ENCODE measurements at regions of chr1 and their contacts with region 1.

Region 1: DNA sequence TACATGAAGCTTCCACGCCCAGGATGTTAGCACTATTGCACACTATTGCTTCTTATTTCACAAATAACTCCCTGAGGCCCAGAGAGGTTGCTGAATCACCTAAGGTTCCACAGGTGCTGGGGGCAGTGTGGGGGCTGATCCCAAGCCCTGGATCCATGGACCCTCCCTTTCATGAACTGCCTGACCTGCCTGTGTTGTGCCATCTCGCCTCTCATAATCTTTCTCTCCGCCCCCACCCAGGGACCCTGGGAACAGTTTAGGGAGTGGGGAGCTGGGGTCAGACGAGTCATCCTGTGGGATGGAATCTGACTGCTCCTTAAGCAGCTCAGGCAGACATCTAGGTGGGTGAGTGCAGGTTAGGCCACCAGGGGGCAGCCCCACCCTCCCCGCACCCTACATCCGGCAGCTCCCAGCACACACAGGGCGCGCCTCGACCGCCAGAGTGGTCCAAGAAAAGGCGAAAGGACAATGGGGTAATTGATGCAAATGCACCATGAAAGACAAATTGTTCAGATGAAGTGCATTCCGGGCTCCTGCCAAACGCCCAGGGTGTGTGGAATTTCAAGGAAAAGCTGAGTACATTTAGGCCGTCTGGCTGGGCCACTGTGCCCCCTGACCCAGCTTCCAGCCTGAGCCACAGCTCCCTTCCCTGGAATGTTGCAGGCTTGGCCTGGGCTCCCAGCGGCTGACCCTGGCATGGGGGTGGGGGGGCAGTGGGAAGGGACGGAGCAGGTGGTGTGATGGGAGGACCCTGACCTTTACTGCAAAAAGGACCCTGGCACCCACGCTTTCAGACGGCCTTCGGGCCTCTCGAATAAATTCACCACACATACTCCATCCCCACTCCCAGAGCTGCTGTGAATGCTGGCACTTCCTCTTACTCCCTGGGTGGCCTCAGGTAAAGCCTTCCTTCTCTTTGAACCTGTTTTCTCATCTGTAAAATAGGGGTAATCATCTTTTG is 20.8 kb downstream of the PHLDA3 start:
- DNase-seq: peak; percentile 84
- H3K4me3 ChIP-seq: no peak overlapping the region
- H3K27ac ChIP-seq: peak overlapping the region; percentile 59
- H3K4me1 ChIP-seq: peaks cover 41% of the 10 kb centered on the region
- H3K27me3 ChIP-seq: no peaks in the 10 kb centered on the region
- CTCF ChIP-seq: peak; percentile 72 to 90

Region 2: DNA sequence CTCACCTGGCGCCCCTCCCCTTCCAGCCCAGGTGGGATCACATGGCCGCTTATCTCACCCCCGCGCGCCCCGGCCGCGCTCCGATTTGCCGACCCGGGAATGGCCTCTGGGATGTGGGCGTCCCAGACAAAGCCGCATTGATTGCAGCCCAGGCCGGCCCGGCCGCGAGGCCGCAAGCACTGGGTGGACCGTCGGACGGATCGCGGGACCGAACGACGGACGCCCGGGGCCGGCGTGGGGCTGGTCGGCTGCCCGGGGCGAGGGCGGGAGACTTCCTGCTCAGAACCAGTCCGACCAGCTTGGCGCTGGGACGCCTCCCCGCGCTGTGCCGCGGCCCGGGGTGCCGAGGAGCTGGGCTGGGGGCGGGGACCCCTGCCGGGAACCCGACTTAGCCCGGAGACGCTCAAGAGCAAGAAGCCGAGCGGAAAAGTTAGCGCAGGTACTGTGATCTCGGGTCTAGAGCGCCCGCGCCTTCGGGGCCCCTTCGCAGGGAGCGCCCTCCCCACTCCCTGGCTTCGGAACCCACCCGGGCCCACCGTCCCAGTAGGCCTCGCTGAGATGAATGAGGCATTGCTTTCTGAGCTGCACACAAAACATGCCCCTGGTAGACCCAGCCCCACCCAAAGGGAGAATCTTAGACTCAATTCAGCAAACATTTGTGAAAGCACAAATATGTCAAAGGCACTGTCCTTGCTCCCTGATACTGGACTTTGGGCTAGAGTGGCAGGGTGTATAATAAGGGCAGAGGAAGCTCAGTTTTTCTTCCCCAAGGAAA is 48.7 kb before region 1 on chr1:
- CTCF ChIA-PET with region 1: no interaction called
- dilution Hi-C with region 1: loop called (anchors 5 kb)
- in situ Hi-C with region 1: no loop called
- intact Hi-C with region 1: no loop called
- DNase-seq: peak; percentile 85
- H3K4me3 ChIP-seq: peak overlapping the region; percentile 88 to 90 (median 90)
- H3K27ac ChIP-seq: peak overlapping the region; percentile 77
- H3K4me1 ChIP-seq: peaks cover 44% of the 10 kb centered on the region
- H3K27me3 ChIP-seq: no peaks in the 10 kb centered on the region
- CTCF ChIP-seq: no peak

Region 3: GRCh38 chr1:201460814-201461657 is 12.8 kb after region 1 on chr1:
- CTCF ChIA-PET with region 1: interaction called, 3 read pairs
- dilution Hi-C with region 1: no loop called
- in situ Hi-C with region 1: no loop called
- intact Hi-C with region 1: loop called (anchors 1 kb)
- DNase-seq: peak; percentile 99
- H3K4me3 ChIP-seq: peak overlapping the region in 1 of 3 experiments; percentile 14
- H3K27ac ChIP-seq: peak overlapping the region; percentile 98
- H3K4me1 ChIP-seq: peaks cover 78% of the 10 kb centered on the region
- H3K27me3 ChIP-seq: no peaks in the 10 kb centered on the region
- CTCF ChIP-seq: no peak

Region 4: GRCh38 chr1:201468844-201469511 is 20.8 kb after region 1 on chr1 and contains the start of gene PHLDA3:
- CTCF ChIA-PET with region 1: no interaction called
- dilution Hi-C with region 1: no loop called
- in situ Hi-C with region 1: no loop called
- intact Hi-C with region 1: loop called (anchors 1 kb)
- DNase-seq: peak; percentile 93
- H3K4me3 ChIP-seq: peak within 1 kb of the TSS; percentile 85 to 100 (median 97)
- H3K27ac ChIP-seq: peak within 1 kb of the TSS; percentile 91
- H3K4me1 ChIP-seq: peaks cover 41% of the 10 kb centered on the region
- H3K27me3 ChIP-seq: no peaks in the 10 kb centered on the region
- CTCF ChIP-seq: no peak
- total RNA-seq, gene PHLDA3: 132 to 205 TPM

Region 5: DNA sequence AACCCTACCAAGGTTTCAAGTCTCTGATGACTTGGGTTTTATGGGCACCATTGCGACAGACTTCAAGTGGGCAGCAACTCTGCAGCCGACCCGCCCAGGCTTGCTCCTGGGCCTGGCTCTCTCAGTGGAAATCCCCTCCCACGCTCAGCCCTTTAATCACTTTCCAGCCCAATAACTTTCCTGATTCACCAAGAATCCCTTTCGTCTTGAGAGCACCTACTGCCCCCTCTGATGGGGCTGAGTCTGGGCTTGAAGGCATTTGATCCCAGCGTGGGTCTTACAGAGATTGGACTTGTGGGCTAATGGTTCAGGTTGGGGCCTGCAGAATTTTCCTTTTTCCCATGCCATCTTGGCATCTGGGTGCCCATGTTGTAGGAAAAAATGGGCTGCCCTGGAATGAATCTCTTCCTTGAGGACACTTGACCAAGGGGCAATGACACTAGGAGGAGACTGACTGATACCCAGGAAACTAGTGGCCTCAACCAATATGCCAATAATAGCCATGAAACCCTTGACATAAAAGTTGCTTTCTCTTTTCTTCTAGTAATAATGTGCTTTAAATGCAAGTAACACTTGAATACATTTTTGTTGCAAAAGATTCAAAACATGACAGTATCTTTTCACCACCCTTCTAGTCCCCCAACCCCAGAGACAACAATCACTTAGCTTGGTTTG is 28.6 kb after region 1 on chr1:
- CTCF ChIA-PET with region 1: interaction called, 5 read pairs
- dilution Hi-C with region 1: no loop called
- in situ Hi-C with region 1: no loop called
- intact Hi-C with region 1: loop called (anchors 1 kb)
- DNase-seq: peak; percentile 99
- H3K4me3 ChIP-seq: no peak overlapping the region
- H3K27ac ChIP-seq: peak overlapping the region; percentile 97
- H3K4me1 ChIP-seq: peaks cover 58% of the 10 kb centered on the region
- H3K27me3 ChIP-seq: no peaks in the 10 kb centered on the region
- CTCF ChIP-seq: peak in 1 of 2 donors; percentile 39

Region 6: GRCh38 chr1:201481761-201482493 is 33.7 kb after region 1 on chr1:
- CTCF ChIA-PET with region 1: interaction called, 5 read pairs
- dilution Hi-C with region 1: no loop called
- in situ Hi-C with region 1: no loop called
- intact Hi-C with region 1: loop called (anchors 1 kb)
- DNase-seq: peak; percentile 68
- H3K4me3 ChIP-seq: peak overlapping the region in 1 of 3 experiments; percentile 7
- H3K27ac ChIP-seq: no peak overlapping the region
- H3K4me1 ChIP-seq: peaks cover 30% of the 10 kb centered on the region
- H3K27me3 ChIP-seq: no peaks in the 10 kb centered on the region
- CTCF ChIP-seq: peak; percentile 71 to 90

Region 7: GRCh38 chr1:201511941-201512539 is 63.8 kb after region 1 on chr1:
- CTCF ChIA-PET with region 1: interaction called, 9 read pairs
- dilution Hi-C with region 1: loop called (anchors 5 kb)
- in situ Hi-C with region 1: loop called (anchors 5 to 10 kb)
- intact Hi-C with region 1: loop called (anchors 1 kb)
- DNase-seq: no peak
- H3K4me3 ChIP-seq: no peak overlapping the region
- H3K27ac ChIP-seq: no peak overlapping the region
- H3K4me1 ChIP-seq: peaks cover 36% of the 10 kb centered on the region
- H3K27me3 ChIP-seq: no peaks in the 10 kb centered on the region
- CTCF ChIP-seq: no peak